ENCODE measurements at regions of chr5 and their contacts with region 1.

Region 1: DNA sequence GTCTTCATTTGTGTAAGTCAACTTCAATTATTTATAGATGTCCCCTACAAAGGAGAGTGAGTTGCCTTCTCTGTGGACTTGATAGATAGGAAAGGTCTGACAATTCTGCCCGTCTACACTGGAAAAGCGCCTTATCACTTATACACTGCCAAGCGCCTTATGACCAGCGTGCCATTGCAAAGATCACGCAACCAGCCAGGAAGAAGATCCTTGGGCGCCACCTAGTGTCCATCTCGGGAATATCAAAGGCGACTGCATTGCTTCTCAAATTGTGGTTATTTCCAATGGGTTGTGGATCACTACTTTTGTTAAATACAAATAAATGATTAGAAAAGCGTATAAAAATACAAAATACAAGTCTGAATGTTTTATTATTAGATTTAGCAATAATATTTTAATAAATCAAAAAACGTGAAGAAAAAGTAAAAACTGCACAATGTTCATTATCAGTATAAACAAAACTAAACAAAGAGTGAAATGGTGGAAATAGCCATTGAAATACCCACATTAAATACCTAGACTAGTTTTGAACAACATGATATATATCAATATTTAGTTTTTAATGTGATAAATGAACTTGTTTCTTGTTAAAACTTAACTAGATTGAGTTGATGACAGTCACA is 27.8 kb downstream of the SUB1 start:
- DNase-seq: peak; percentile 87
- ATAC-seq: peak; percentile 81
- H3K4me3 ChIP-seq: no peak overlapping the region
- H3K27ac ChIP-seq: no peak overlapping the region
- H3K4me1 ChIP-seq: no peaks in the 10 kb centered on the region
- H3K27me3 ChIP-seq: no peaks in the 10 kb centered on the region
- CTCF ChIP-seq: peak; percentile 92

Region 2: DNA sequence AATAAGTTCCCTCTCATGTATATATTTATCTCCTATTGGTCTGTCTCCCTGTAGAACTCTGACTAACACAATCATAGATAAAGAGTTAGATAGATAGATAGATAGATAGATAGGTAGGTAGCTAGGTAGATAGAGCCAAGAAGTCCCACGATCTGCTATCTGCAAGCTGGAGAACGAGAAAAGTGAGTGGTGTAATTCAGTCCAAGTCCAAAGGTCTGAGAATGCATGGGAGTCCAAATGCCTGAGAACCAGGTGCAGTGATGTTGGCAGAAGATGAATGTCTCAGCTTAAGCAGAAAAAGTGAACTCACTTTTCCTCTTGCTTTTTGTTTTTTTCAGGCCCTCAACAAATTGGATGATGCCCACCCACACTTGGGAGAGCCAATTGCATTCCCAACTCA is 131.0 kb before region 1 on chr5:
- CTCF ChIA-PET with region 1: interaction called, 10 read pairs
- POLR2A ChIA-PET with region 1: no interaction called
- intact Hi-C with region 1: no loop called
- DNase-seq: no peak
- ATAC-seq: no peak
- H3K4me3 ChIP-seq: no peak overlapping the region
- H3K27ac ChIP-seq: no peak overlapping the region
- H3K4me1 ChIP-seq: no peaks in the 10 kb centered on the region
- H3K27me3 ChIP-seq: no peaks in the 10 kb centered on the region
- CTCF ChIP-seq: no peak

Region 3: GRCh38 chr5:32489791-32490582 is 123.2 kb before region 1 on chr5:
- CTCF ChIA-PET with region 1: no interaction called
- POLR2A ChIA-PET with region 1: no interaction called
- intact Hi-C with region 1: loop called (anchors 1 kb)
- DNase-seq: peak; percentile 86
- ATAC-seq: peak; percentile 88
- H3K4me3 ChIP-seq: peak overlapping the region; percentile 9; the same call in 1 of the 2 replicates
- H3K27ac ChIP-seq: peak overlapping the region; percentile 53
- H3K4me1 ChIP-seq: peaks cover 14% of the 10 kb centered on the region
- H3K27me3 ChIP-seq: no peaks in the 10 kb centered on the region
- CTCF ChIP-seq: peak; percentile 91

Measured in PC-3 (cell line).